GM12878 (cell line): ENCODE measurements at regions of chr3 and their contacts with region 1.

Region 1: DNA sequence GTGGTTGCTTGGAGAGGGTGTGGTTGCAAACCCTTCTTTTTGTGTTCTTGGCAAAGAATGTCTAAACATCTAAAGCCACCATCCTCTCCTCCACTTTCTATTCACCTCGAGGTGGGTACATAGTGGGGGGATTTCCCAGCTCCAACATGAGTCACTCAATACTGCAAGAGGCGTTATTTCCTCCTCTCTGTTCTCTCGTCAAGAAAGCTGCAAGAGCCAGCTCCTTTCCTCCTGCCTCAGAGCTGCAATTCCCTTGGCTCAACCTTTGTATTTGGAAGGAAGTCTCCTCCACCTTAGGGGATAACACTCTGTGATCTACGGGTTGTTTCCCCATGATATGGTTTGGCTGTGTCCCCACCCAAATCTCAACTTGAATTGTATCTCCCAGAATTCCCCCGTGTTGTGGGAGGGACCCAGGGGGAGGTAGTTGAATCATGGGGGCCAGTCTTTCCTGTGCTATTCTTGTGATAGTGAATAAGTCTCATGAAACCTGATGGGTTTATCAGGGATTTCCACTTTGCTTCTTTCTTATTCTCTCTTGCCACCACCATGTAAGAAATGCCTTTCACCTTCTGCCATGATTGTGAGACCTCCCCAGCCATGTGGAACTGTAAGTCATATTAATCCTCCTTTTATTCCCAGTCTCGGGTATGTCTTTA is 138.4 kb downstream of the PLCL2 start:
- DNase-seq: peak; percentile 56
- ATAC-seq: peak; percentile 99
- H3K4me3 ChIP-seq: no peak overlapping the region
- H3K27ac ChIP-seq: peak overlapping the region; percentile 45; the same call in 1 of the 2 replicates
- H3K4me1 ChIP-seq: no peaks in the 10 kb centered on the region
- H3K27me3 ChIP-seq: no peaks in the 10 kb centered on the region
- CTCF ChIP-seq: no peak
- EP300 ChIP-seq: peak in 1 of 2 experiments; percentile 41; a peak in 2 of 4 replicates
- POLR2A ChIP-seq: no peak
- RAD21 ChIP-seq: no peak

Region 2: GRCh38 chr3:16842272-16843270 is 180.6 kb before region 1 on chr3:
- CTCF ChIA-PET with region 1: interaction called, 5 read pairs
- POLR2A ChIA-PET with region 1: interaction called, 4 read pairs
- RAD21 ChIA-PET with region 1: interaction called, 12 read pairs
- SMC1A ChIA-PET with region 1: interaction called, 10 read pairs
- in situ Hi-C with region 1: no loop called
- intact Hi-C with region 1: no loop called
- DNase-seq: peak; percentile 83
- ATAC-seq: peak; percentile 93
- H3K4me3 ChIP-seq: peak overlapping the region; percentile 36
- H3K27ac ChIP-seq: peak overlapping the region; percentile 77
- H3K4me1 ChIP-seq: peaks cover 45% of the 10 kb centered on the region
- H3K27me3 ChIP-seq: no peaks in the 10 kb centered on the region
- CTCF ChIP-seq: no peak
- EP300 ChIP-seq: peak in 1 of 2 experiments; percentile 16; a peak in 1 of 4 replicates
- POLR2A ChIP-seq: peak; percentile 58
- RAD21 ChIP-seq: no peak

Region 3: GRCh38 chr3:16897254-16897926 is 125.7 kb before region 1 on chr3:
- CTCF ChIA-PET with region 1: interaction called, 4 read pairs
- POLR2A ChIA-PET with region 1: no interaction called
- RAD21 ChIA-PET with region 1: interaction called, 5 read pairs
- SMC1A ChIA-PET with region 1: interaction called, 14 read pairs
- in situ Hi-C with region 1: no loop called
- intact Hi-C with region 1: no loop called
- DNase-seq: peak; percentile 52
- ATAC-seq: peak; percentile 79
- H3K4me3 ChIP-seq: peak overlapping the region; percentile 47; the same call in 1 of the 2 replicates
- H3K27ac ChIP-seq: peak overlapping the region; percentile 79
- H3K4me1 ChIP-seq: peaks cover 26% of the 10 kb centered on the region
- H3K27me3 ChIP-seq: no peaks in the 10 kb centered on the region
- CTCF ChIP-seq: no peak
- EP300 ChIP-seq: peak in 1 of 2 experiments; percentile 47; a peak in 1 of 4 replicates
- POLR2A ChIP-seq: no peak
- RAD21 ChIP-seq: no peak

Region 4: GRCh38 chr3:16923112-16923511 is 100.0 kb before region 1 on chr3:
- CTCF ChIA-PET with region 1: interaction called, 42 read pairs
- POLR2A ChIA-PET with region 1: interaction called, 8 read pairs
- RAD21 ChIA-PET with region 1: interaction called, 29 read pairs
- SMC1A ChIA-PET with region 1: interaction called, 51 read pairs
- in situ Hi-C with region 1: no loop called
- intact Hi-C with region 1: loop called (anchors 5 kb)
- DNase-seq: no peak
- ATAC-seq: no peak
- H3K4me3 ChIP-seq: no peak overlapping the region
- H3K27ac ChIP-seq: no peak overlapping the region
- H3K4me1 ChIP-seq: peaks cover 32% of the 10 kb centered on the region
- H3K27me3 ChIP-seq: no peaks in the 10 kb centered on the region
- CTCF ChIP-seq: no peak
- EP300 ChIP-seq: no peak
- POLR2A ChIP-seq: no peak
- RAD21 ChIP-seq: no peak

Region 5: DNA sequence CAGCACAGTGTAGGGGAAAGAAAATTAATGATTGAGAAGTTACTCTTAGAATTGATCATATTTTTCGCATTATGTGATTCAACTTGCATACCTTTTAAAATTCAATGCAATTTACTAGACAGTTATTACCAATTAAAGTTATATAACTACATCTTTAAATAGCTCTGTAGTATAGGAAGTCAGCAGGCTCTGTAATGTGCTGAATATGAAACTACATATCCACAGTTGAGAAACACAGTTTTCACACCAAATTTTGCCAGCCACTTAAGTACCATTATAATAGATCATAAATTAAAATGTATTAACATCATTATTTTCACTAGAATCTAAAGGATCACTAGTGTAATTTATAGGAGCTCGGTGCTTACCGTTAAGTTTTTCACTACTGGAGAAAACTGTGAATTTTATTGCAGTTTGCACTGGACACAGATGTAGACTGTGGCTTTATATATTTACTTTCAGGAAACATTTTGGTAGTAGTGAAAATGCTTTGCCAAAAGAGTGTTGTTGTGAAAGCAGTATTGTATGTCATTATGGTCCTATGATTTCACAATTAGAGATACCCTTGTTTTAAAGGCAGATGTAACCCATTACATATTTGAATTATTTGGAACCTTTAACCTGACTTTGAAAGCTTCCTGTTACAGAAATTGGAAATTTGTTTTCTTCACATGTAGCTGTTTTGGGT is 24.8 kb before region 1 on chr3:
- CTCF ChIA-PET with region 1: no interaction called
- POLR2A ChIA-PET with region 1: interaction called, 3 read pairs
- RAD21 ChIA-PET with region 1: interaction called, 10 read pairs
- SMC1A ChIA-PET with region 1: interaction called, 17 read pairs
- in situ Hi-C with region 1: no loop called
- intact Hi-C with region 1: no loop called
- DNase-seq: no peak
- ATAC-seq: peak; percentile 74
- H3K4me3 ChIP-seq: no peak overlapping the region
- H3K27ac ChIP-seq: no peak overlapping the region; the same call in 1 of the 2 replicates
- H3K4me1 ChIP-seq: peaks cover 7% of the 10 kb centered on the region
- H3K27me3 ChIP-seq: no peaks in the 10 kb centered on the region
- CTCF ChIP-seq: no peak
- EP300 ChIP-seq: no peak
- POLR2A ChIP-seq: no peak
- RAD21 ChIP-seq: no peak

Region 6: DNA sequence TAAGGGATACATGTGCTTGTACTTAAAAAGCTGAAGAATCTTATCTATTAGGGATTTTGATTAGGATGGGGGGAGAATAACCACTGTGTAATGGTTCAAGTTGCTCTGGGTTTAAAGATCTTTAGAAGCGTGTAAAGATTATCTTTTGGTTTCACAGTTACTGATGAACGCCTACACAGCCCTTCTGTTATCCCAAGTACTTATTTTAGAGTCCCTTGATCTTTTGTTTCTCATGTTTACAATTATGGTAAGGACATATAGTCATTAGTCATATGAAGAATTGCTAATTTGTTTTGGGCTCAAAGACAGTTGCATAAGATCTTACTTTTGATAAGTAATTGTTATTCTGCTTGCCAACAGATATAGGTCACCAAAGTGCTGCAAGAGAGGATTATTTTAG is 21.7 kb after region 1 on chr3:
- CTCF ChIA-PET with region 1: interaction called, 7 read pairs
- POLR2A ChIA-PET with region 1: interaction called, 9 read pairs
- RAD21 ChIA-PET with region 1: interaction called, 17 read pairs
- SMC1A ChIA-PET with region 1: interaction called, 24 read pairs
- in situ Hi-C with region 1: no loop called
- intact Hi-C with region 1: no loop called
- DNase-seq: no peak
- ATAC-seq: peak; percentile 84
- H3K4me3 ChIP-seq: no peak overlapping the region
- H3K27ac ChIP-seq: peak overlapping the region; percentile 72
- H3K4me1 ChIP-seq: peaks cover 38% of the 10 kb centered on the region
- H3K27me3 ChIP-seq: no peaks in the 10 kb centered on the region
- CTCF ChIP-seq: no peak
- EP300 ChIP-seq: peak; percentile 85 to 87; a peak in 3 of 4 replicates
- POLR2A ChIP-seq: no peak
- RAD21 ChIP-seq: 0 out of 2 replicates have a peak, but pooled peaks have one; percentile 5

Region 7: GRCh38 chr3:17077606-17078005 is 54.5 kb after region 1 on chr3:
- CTCF ChIA-PET with region 1: no interaction called
- POLR2A ChIA-PET with region 1: no interaction called
- RAD21 ChIA-PET with region 1: no interaction called
- SMC1A ChIA-PET with region 1: no interaction called
- in situ Hi-C with region 1: no loop called
- intact Hi-C with region 1: no loop called
- DNase-seq: no peak
- ATAC-seq: no peak
- H3K4me3 ChIP-seq: no peak overlapping the region
- H3K27ac ChIP-seq: no peak overlapping the region
- H3K4me1 ChIP-seq: peaks cover 10% of the 10 kb centered on the region
- H3K27me3 ChIP-seq: no peaks in the 10 kb centered on the region
- CTCF ChIP-seq: no peak
- EP300 ChIP-seq: no peak
- POLR2A ChIP-seq: no peak
- RAD21 ChIP-seq: no peak